ENCODE measurements at regions of chr19 and their contacts with region 1.

Region 1: GRCh38 chr19:49929611-49930482 is 543 bp upstream of the NUP62 start:
- DNase-seq: peak; percentile 92 to 95
- ATAC-seq: peak; percentile 88 to 93 (median 92)
- H3K4me3 ChIP-seq: peak overlapping the region; percentile 98
- H3K27ac ChIP-seq: peak overlapping the region; percentile 88
- H3K4me1 ChIP-seq: peaks cover 25% of the 10 kb centered on the region
- H3K27me3 ChIP-seq: no peaks in the 10 kb centered on the region
- CTCF ChIP-seq: no peak

Region 2: DNA sequence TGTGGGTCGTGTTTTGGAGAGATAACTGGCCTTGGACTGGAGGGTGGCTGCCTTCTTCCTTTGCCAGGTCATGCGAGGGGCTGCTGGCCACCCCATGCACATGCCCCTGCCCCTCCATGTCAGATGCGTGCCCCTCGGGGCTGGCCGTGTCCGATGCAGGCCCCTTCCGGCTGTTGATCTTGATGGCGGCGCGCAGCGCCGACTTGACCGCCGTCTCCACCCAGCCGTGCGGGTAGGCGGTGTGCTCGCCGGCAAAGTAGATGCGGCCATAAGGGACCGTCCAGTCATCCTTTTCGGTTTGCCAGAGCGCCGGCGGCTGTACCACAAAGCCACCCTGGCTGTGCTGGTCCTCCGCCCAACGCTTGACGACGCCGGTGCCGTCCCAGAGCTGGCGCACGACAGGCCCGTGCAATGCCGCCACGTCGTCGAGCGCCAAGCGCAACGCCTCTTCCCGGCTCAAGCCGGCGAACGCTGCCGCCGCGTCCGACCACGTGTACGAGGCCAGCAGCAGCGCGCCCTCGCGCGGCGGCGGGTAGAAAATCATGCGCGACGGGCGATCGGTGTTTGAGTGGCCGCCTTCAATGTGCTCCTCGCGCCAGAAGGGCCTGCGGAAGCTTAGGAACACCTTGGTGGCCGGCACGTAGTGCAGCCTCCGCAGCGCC is 40.0 kb before region 1 on chr19:
- intact Hi-C with region 1: loop called in 1 of 2 experiments (anchors 5 kb)
- DNase-seq: peak; percentile 82 to 91
- ATAC-seq: peak; percentile 73 to 87 (median 78)
- H3K4me3 ChIP-seq: peak overlapping the region; percentile 53
- H3K27ac ChIP-seq: no peak overlapping the region
- H3K4me1 ChIP-seq: peaks cover 9% of the 10 kb centered on the region
- H3K27me3 ChIP-seq: no peaks in the 10 kb centered on the region
- CTCF ChIP-seq: peak; percentile 73